ENCODE measurements at regions of chr10 and their contacts with region 1.

Region 1: GRCh38 chr10:110567201-110568054 is at the start of gene SMC3:
- DNase-seq: peak; percentile 96 to 98
- H3K4me3 ChIP-seq: peak within 1 kb of the TSS; percentile 82
- H3K4me3 Mint-ChIP-seq: peak within 1 kb of the TSS; percentile 90
- H3K27ac Mint-ChIP-seq: peak within 1 kb of the TSS; percentile 100
- H3K4me1 ChIP-seq: peaks cover 30% of the 10 kb centered on the region
- H3K4me1 Mint-ChIP-seq: peaks cover 16% of the 10 kb centered on the region
- H3K27me3 ChIP-seq: no peaks in the 10 kb centered on the region
- H3K27me3 Mint-ChIP-seq: no peaks in the 10 kb centered on the region
- CTCF ChIP-seq: no peak
- total RNA-seq, gene SMC3: 91.4 and 95.7 TPM in 2 replicates

Region 2: DNA sequence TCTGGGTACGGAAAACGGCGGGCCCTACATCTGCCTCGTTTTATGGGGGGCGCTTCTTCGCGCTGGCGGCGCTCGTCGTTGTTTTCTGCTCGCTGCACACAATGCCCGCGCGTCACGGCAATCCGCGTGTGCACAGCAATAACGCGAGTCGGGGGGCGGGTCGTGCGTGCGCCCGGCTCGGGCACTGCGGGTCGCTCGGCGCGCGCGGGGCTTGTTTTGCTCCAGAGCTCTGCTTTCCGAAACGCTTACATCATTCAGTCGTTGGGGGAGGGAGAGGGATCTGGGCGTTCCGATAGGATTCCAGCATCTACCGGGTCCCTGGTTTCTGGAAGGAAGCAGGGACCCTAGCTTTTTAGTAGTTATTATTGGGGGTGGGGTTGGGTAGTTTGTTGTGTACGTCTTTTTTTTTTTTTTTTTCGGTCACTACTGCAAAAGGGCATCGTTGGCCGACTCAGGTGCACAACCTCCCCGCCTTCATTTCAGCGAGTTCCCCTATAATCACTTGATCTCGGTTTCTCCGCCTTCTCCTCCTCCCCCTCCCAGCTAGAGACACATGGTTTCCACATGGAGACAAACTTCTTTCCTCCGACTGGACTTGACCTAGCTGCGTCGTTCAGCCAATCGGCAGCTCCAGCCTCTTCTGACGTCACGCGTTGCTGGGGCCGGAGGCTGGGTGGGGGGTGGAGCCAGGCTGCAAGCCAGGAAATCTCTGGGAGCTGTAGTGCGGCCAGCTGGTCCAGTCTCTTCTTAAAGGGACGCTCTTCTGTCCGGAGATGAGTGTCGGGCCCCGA is 356.6 kb before region 1 on chr10:
- CTCF ChIA-PET with region 1: no interaction called
- POLR2A ChIA-PET with region 1: no interaction called
- intact Hi-C with region 1: loop called (anchors 5 kb)
- DNase-seq: peak; percentile 96 to 97
- H3K4me3 ChIP-seq: peak overlapping the region; percentile 79
- H3K4me3 Mint-ChIP-seq: peak overlapping the region; percentile 81
- H3K27ac Mint-ChIP-seq: peak overlapping the region; percentile 74
- H3K4me1 ChIP-seq: peaks cover 6% of the 10 kb centered on the region; the same call in 1 of the 2 replicates
- H3K4me1 Mint-ChIP-seq: peaks cover 28% of the 10 kb centered on the region
- H3K27me3 ChIP-seq: no peaks in the 10 kb centered on the region
- H3K27me3 Mint-ChIP-seq: no peaks in the 10 kb centered on the region
- CTCF ChIP-seq: no peak

Region 3: GRCh38 chr10:110535958-110536891 is 31.2 kb before region 1 on chr10:
- CTCF ChIA-PET with region 1: no interaction called
- POLR2A ChIA-PET with region 1: no interaction called
- intact Hi-C with region 1: no loop called
- DNase-seq: peak in 1 of 2 experiments; percentile 25
- H3K4me3 ChIP-seq: no peak overlapping the region
- H3K4me3 Mint-ChIP-seq: no peak overlapping the region
- H3K27ac Mint-ChIP-seq: no peak overlapping the region
- H3K4me1 ChIP-seq: no peaks in the 10 kb centered on the region; the same call in 1 of the 2 replicates
- H3K4me1 Mint-ChIP-seq: no peaks in the 10 kb centered on the region
- H3K27me3 ChIP-seq: no peaks in the 10 kb centered on the region
- H3K27me3 Mint-ChIP-seq: no peaks in the 10 kb centered on the region
- CTCF ChIP-seq: peak in 1 of 2 experiments; percentile 40

Region 4: DNA sequence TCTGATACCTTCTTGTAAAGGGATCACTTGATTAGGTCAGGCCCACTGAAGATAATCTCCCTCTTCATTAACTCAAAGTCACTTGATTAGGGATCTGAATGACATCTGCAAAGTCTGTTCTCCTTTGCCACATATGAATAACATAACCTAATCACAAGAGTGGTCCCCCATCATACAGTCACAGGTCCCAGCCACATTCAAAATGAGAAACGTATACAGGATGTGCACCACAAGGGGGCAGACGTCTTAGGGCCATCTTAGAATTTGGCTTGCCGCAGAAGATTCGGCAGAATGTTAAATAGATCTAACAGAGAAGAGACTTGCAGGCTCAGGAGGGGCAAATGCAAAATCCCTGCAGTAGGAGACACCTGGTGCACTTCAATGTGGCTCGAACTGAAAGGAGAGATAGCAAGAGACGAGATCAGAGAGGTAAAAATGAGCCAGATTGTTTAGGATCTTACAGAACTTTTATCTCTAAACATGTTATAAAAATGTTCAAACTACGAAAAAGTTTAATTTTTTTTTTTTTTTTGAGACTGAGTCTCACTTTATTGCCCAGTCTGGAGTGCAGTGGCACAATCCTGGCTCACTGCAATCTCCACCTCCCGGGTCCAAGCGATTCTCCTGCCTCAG is 10.3 kb before region 1 on chr10:
- CTCF ChIA-PET with region 1: interaction called, 3 read pairs
- POLR2A ChIA-PET with region 1: no interaction called
- intact Hi-C with region 1: loop called (anchors 1 kb)
- DNase-seq: peak in 1 of 2 experiments; percentile 42
- H3K4me3 ChIP-seq: no peak overlapping the region
- H3K4me3 Mint-ChIP-seq: no peak overlapping the region
- H3K27ac Mint-ChIP-seq: peak overlapping the region; percentile 11
- H3K4me1 ChIP-seq: peaks cover 39% of the 10 kb centered on the region
- H3K4me1 Mint-ChIP-seq: peaks cover 43% of the 10 kb centered on the region
- H3K27me3 ChIP-seq: no peaks in the 10 kb centered on the region
- H3K27me3 Mint-ChIP-seq: no peaks in the 10 kb centered on the region
- CTCF ChIP-seq: peak; percentile 27 to 53

Region 5: GRCh38 chr10:110600487-110601101 is 33.2 kb after region 1 on chr10:
- CTCF ChIA-PET with region 1: interaction called, 3 read pairs
- POLR2A ChIA-PET with region 1: no interaction called
- intact Hi-C with region 1: loop called (anchors 5 kb)
- DNase-seq: peak; percentile 54 to 72
- H3K4me3 ChIP-seq: no peak overlapping the region
- H3K4me3 Mint-ChIP-seq: no peak overlapping the region
- H3K27ac Mint-ChIP-seq: no peak overlapping the region
- H3K4me1 ChIP-seq: no peaks in the 10 kb centered on the region
- H3K4me1 Mint-ChIP-seq: no peaks in the 10 kb centered on the region
- H3K27me3 ChIP-seq: no peaks in the 10 kb centered on the region
- H3K27me3 Mint-ChIP-seq: no peaks in the 10 kb centered on the region
- CTCF ChIP-seq: peak; percentile 61 to 76

Region 6: DNA sequence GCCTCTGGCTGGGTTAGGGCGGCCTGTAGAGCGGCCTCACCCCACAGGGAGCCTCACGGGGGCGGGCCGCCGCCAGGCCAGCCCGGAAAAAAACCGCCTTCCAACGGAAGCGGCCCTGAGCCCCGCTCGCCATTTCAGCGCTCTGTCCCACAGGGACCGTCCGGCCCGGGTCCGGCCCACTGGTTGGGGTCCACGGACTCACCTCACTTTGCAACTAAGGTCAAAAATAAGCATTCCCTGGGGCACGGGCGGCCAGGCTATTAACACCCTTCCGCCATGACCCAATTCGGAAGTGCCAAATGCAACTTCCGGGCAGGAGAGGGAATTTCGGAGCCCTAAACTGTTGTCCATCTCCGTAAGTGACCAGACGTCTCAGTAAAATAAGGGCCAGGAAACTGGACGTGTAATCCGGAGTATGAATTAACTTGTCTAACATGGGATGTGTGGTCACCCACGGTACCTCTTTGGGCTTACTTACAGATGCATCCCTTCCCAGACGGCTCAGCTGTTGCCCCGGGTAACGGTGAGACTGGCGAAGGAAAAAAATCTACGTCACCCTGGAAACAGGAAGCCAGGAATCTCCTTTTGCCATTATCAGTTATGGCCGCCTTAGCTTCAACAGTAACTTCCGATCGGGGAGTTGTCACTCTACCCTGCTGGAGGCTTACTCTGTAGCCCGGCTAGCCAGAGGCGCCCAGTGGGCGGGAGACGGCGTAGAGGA is 351.4 kb after region 1 on chr10 and contains the start of gene BBIP1:
- CTCF ChIA-PET with region 1: no interaction called
- POLR2A ChIA-PET with region 1: no interaction called
- intact Hi-C with region 1: no loop called
- DNase-seq: no peak
- H3K4me3 ChIP-seq: peak within 1 kb of the TSS; percentile 83
- H3K4me3 Mint-ChIP-seq: peak within 1 kb of the TSS; percentile 79
- H3K27ac Mint-ChIP-seq: peak within 1 kb of the TSS; percentile 100
- H3K4me1 ChIP-seq: peaks cover 12% of the 10 kb centered on the region; the same call in 1 of the 2 replicates
- H3K4me1 Mint-ChIP-seq: peaks cover 15% of the 10 kb centered on the region
- H3K27me3 ChIP-seq: no peaks in the 10 kb centered on the region
- H3K27me3 Mint-ChIP-seq: no peaks in the 10 kb centered on the region
- CTCF ChIP-seq: peak in 1 of 2 experiments; percentile 6
- total RNA-seq, gene BBIP1: 16.7 and 19.2 TPM in 2 replicates

Measured in Caco-2 (cell line).